Activated CD4-positive, alpha-beta memory T cell treated with anti-CD3 and anti-CD28 coated beads, Interleukin-2, amount 10 ng/mL, durations not matched to agents 7 days and 5 days (primary cell): ENCODE measurements at regions of chr21 and their contacts with region 1.

Region 1: DNA sequence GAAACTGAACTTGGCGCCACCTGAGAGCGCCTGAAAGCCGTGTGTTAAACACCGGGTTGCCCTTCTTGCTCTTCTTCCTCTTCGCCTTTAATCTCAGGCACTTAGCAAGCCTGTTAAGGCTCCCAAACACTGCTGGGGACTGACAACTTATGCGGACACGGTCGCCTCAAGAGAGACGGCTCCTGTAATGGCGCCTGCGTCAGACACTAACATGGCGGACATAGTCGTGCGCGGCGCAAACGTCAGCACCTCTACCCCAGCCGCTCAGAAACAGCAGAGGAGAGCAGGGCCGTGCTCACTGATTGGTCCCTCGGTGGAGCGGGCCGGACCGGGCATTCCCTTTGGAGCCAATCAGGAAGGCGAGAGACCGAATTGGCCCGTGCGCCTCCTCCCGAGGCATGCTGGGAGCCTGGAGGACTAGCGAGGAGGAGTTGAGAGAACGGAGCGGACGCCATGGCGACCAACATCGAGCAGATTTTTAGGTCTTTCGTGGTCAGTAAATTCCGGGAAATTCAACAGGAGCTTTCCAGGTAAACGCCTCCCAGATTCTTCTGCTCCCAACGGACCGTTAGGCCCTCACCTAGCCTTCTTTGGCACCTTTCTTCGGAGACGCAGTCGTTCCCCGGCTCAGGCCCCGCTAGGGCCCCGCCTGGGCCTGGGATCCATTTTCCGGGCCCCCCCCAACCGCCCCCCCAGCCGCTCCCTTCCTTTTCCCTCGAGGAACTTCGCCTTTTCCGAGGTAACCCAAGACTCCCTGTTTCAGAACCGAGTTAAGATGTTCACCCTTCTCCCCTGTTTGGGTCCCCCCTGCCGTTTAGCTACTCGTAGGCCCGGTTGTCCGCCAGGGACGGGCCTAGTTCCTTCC is at the start of gene SON:
- DNase-seq: peak; percentile 99
- H3K4me3 Mint-ChIP-seq: peak within 1 kb of the TSS; percentile 90
- H3K27ac Mint-ChIP-seq: peak within 1 kb of the TSS; percentile 98
- H3K4me1 Mint-ChIP-seq: peaks cover 33% of the 10 kb centered on the region
- H3K27me3 Mint-ChIP-seq: no peaks in the 10 kb centered on the region
- total RNA-seq, gene SON: 279 to 290 TPM

Region 2: GRCh38 chr21:33479679-33480480 is 63.0 kb before region 1 on chr21 and contains the start of gene TMEM50B:
- CTCF ChIA-PET with region 1: interaction called, 4 read pairs
- POLR2A ChIA-PET with region 1: interaction called, 31 read pairs
- DNase-seq: peak; percentile 96
- H3K4me3 Mint-ChIP-seq: peak within 1 kb of the TSS; percentile 90
- H3K27ac Mint-ChIP-seq: peak within 1 kb of the TSS; percentile 81
- H3K4me1 Mint-ChIP-seq: peaks cover 21% of the 10 kb centered on the region
- H3K27me3 Mint-ChIP-seq: peaks cover 4% of the 10 kb centered on the region
- total RNA-seq, gene TMEM50B: 26.5 to 28.2 TPM

Region 3: GRCh38 chr21:33558777-33559421 is 16.0 kb after region 1 on chr21:
- CTCF ChIA-PET with region 1: interaction called, 5 read pairs
- POLR2A ChIA-PET with region 1: interaction called, 22 read pairs
- DNase-seq: no peak
- H3K4me3 Mint-ChIP-seq: no peak overlapping the region
- H3K27ac Mint-ChIP-seq: no peak overlapping the region
- H3K4me1 Mint-ChIP-seq: peaks cover 52% of the 10 kb centered on the region
- H3K27me3 Mint-ChIP-seq: no peaks in the 10 kb centered on the region

Region 4: GRCh38 chr21:33588485-33589335 is 45.8 kb after region 1 on chr21 and contains the start of gene DONSON:
- CTCF ChIA-PET with region 1: interaction called, 7 read pairs
- POLR2A ChIA-PET with region 1: interaction called, 70 read pairs
- DNase-seq: peak; percentile 89
- H3K4me3 Mint-ChIP-seq: peak within 1 kb of the TSS; percentile 94
- H3K27ac Mint-ChIP-seq: peak within 1 kb of the TSS; percentile 80
- H3K4me1 Mint-ChIP-seq: peaks cover 29% of the 10 kb centered on the region
- H3K27me3 Mint-ChIP-seq: no peaks in the 10 kb centered on the region
- total RNA-seq, gene DONSON: 35.4 to 35.5 TPM